CD4-positive, alpha-beta T cell (primary cell): ENCODE measurements at regions of chr7 and their contacts with region 1.

Region 1: GRCh38 chr7:121366852-121367431 is 29.2 kb downstream of the FAM3C start:
- DNase-seq: peak in 4 of 14 experiments; percentile 60 to 71 (median 64)
- ATAC-seq: peak; percentile 32
- H3K4me3 ChIP-seq: no peak overlapping the region
- H3K4me3 Mint-ChIP-seq: no peak overlapping the region
- H3K27ac ChIP-seq: no peak overlapping the region
- H3K27ac Mint-ChIP-seq: no peak overlapping the region
- H3K4me1 ChIP-seq: no peaks in the 10 kb centered on the region
- H3K4me1 Mint-ChIP-seq: no peaks in the 10 kb centered on the region
- H3K27me3 ChIP-seq: no peaks in the 10 kb centered on the region
- H3K27me3 Mint-ChIP-seq: no peaks in the 10 kb centered on the region
- CTCF ChIP-seq: peak; percentile 87

Region 2: GRCh38 chr7:121510296-121510695 is 143.4 kb after region 1 on chr7:
- CTCF ChIA-PET with region 1: interaction called, 6 read pairs
- POLR2A ChIA-PET with region 1: no interaction called
- intact Hi-C with region 1: loop called (anchors 1 kb)
- DNase-seq: peak in 6 of 14 experiments; percentile 3 to 57 (median 36)
- ATAC-seq: no peak
- H3K4me3 ChIP-seq: no peak overlapping the region
- H3K4me3 Mint-ChIP-seq: no peak overlapping the region
- H3K27ac ChIP-seq: no peak overlapping the region
- H3K27ac Mint-ChIP-seq: no peak overlapping the region
- H3K4me1 ChIP-seq: no peaks in the 10 kb centered on the region
- H3K4me1 Mint-ChIP-seq: no peaks in the 10 kb centered on the region
- H3K27me3 ChIP-seq: no peaks in the 10 kb centered on the region
- H3K27me3 Mint-ChIP-seq: peaks cover 21% of the 10 kb centered on the region
- CTCF ChIP-seq: no peak

Region 3: GRCh38 chr7:121994625-121995410 is 627.9 kb after region 1 on chr7:
- CTCF ChIA-PET with region 1: interaction called, 7 read pairs
- POLR2A ChIA-PET with region 1: no interaction called
- intact Hi-C with region 1: loop called (anchors 2 to 5 kb)
- DNase-seq: peak in 7 of 14 experiments; percentile 2 to 33 (median 7)
- ATAC-seq: peak; percentile 70
- H3K4me3 ChIP-seq: no peak overlapping the region
- H3K4me3 Mint-ChIP-seq: no peak overlapping the region
- H3K27ac ChIP-seq: no peak overlapping the region
- H3K27ac Mint-ChIP-seq: no peak overlapping the region
- H3K4me1 ChIP-seq: no peaks in the 10 kb centered on the region
- H3K4me1 Mint-ChIP-seq: no peaks in the 10 kb centered on the region
- H3K27me3 ChIP-seq: no peaks in the 10 kb centered on the region
- H3K27me3 Mint-ChIP-seq: no peaks in the 10 kb centered on the region
- CTCF ChIP-seq: peak; percentile 55